ENCODE measurements at regions of chr18 and their contacts with region 1.

Region 1: GRCh38 chr18:62982600-62983251 is 267.4 kb downstream of the PHLPP1 start:
- DNase-seq: peak; percentile 81
- H3K4me3 ChIP-seq: peak overlapping the region in 1 of 2 experiments; percentile 11; a peak in 1 of 4 replicates
- H3K27ac ChIP-seq: no peak overlapping the region
- H3K4me1 ChIP-seq: peaks cover 0 to 3% of the 10 kb centered on the region in 2 experiments; a peak in 1 of 4 replicates
- H3K27me3 ChIP-seq: no peaks in the 10 kb centered on the region
- CTCF ChIP-seq: peak; percentile 87
- EP300 ChIP-seq: no peak
- RAD21 ChIP-seq: peak; percentile 91

Region 2: DNA sequence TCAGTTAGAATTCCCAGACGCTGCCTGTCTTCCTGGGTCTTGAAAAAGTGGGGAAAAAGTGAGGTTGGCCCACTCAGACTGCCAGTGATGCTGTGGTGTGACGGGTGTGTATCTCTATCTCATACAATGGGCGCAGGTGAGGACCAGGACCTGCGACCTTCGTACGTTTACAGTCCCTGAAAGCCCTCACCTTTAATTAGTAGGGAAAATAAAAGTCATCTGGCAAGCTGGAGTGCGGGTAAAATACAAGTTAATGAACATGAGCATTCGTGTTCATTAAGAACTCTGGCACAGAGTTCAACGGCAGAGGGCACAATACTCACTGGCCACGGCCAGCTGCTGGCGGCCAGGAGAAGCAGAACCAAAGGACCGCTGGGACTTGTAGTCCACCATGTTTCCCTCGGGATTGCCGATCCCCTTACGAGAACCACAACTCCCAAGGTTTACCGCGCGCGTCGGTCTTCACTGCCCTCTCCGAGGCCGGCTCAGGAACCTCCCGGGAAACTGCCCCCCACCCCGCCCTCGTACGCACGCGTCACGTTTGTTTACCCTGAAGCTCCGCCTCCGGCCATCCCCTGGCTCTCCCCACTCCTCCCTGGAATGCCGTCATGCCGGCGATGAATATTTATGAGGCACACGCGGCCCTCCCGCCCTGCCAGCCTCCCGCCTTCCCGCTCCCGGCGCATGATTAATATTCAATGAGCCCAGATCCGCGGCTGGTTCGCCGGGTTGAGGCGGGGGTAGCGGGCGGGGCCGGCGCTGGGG is 267.9 kb before region 1 on chr18:
- CTCF ChIA-PET with region 1: interaction called, 64 read pairs
- POLR2A ChIA-PET with region 1: interaction called, 5 read pairs
- DNase-seq: peak; percentile 96
- H3K4me3 ChIP-seq: peak overlapping the region; percentile 56 to 77
- H3K27ac ChIP-seq: peak overlapping the region; percentile 73 to 77
- H3K4me1 ChIP-seq: peaks cover 0 to 11% of the 10 kb centered on the region in 2 experiments; a peak in 3 of 4 replicates
- H3K27me3 ChIP-seq: no peaks in the 10 kb centered on the region
- CTCF ChIP-seq: peak; percentile 88
- EP300 ChIP-seq: no peak
- RAD21 ChIP-seq: peak; percentile 84

Region 3: GRCh38 chr18:62957885-62958472 is 24.7 kb before region 1 on chr18:
- CTCF ChIA-PET with region 1: interaction called, 10 read pairs
- POLR2A ChIA-PET with region 1: no interaction called
- DNase-seq: no peak
- H3K4me3 ChIP-seq: no peak overlapping the region
- H3K27ac ChIP-seq: no peak overlapping the region
- H3K4me1 ChIP-seq: no peaks in the 10 kb centered on the region
- H3K27me3 ChIP-seq: no peaks in the 10 kb centered on the region
- CTCF ChIP-seq: peak; percentile 73
- EP300 ChIP-seq: no peak
- RAD21 ChIP-seq: peak; percentile 58

Region 4: DNA sequence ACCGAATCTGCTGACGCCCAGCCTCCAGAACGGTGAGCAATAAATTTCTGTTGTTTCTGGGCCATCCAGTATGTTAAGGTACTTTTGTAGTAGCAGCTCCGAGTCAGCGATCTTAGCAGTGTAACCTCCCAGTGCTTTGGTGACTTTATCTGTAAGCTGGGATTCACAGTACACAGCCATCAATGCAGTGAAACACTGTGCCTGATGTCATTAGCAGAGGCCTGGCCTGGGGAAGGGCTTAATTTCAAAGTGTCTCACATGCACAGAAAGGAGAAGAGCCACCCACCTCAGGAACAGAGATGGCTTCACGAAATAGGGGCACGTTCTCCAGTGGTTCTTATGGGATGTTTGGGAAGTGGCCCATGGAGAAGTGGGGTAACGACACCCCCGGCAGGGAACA is 13.8 kb after region 1 on chr18:
- CTCF ChIA-PET with region 1: interaction called, 14 read pairs
- POLR2A ChIA-PET with region 1: no interaction called
- DNase-seq: no peak
- H3K4me3 ChIP-seq: no peak overlapping the region
- H3K27ac ChIP-seq: no peak overlapping the region
- H3K4me1 ChIP-seq: no peaks in the 10 kb centered on the region
- H3K27me3 ChIP-seq: no peaks in the 10 kb centered on the region
- CTCF ChIP-seq: no peak
- EP300 ChIP-seq: no peak
- RAD21 ChIP-seq: no peak

Region 5: DNA sequence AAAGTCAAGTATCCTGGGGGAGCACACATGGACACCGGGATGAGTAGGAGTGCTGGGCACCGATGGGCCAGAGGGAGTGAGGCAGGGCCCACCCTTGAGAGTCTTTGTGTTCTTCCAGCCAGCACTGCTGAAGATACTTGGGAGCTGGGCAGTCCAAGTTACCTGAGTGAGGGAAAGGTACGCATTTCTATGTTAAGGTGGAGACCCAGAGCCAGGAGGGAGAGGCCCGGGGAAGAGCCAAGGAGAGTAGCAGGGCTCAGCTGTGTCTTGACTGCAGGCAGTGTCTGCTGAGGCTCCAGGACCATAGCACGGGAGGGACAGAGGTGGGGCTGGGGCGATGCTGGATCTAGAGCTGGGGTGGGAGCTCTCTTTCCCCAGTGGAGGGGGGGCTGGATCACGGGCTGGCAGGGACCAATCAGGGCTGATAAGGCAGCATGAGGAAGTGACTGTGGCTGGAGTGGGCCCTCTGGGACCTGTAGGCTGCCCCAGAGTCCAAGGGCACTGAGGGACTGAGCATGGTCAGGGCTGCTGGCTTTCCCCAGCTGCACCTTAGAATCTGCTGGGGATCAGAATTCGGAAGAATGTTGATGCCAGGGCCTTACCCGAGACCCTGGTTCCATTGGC is 21.9 kb after region 1 on chr18:
- CTCF ChIA-PET with region 1: interaction called, 11 read pairs
- POLR2A ChIA-PET with region 1: no interaction called
- DNase-seq: no peak
- H3K4me3 ChIP-seq: no peak overlapping the region
- H3K27ac ChIP-seq: no peak overlapping the region
- H3K4me1 ChIP-seq: no peaks in the 10 kb centered on the region; a peak in 1 of 4 replicates
- H3K27me3 ChIP-seq: no peaks in the 10 kb centered on the region
- CTCF ChIP-seq: no peak
- EP300 ChIP-seq: no peak
- RAD21 ChIP-seq: no peak

Measured in SK-N-SH (cell line).